ENCODE measurements at regions of chr11 and their contacts with region 1.

Region 1: DNA sequence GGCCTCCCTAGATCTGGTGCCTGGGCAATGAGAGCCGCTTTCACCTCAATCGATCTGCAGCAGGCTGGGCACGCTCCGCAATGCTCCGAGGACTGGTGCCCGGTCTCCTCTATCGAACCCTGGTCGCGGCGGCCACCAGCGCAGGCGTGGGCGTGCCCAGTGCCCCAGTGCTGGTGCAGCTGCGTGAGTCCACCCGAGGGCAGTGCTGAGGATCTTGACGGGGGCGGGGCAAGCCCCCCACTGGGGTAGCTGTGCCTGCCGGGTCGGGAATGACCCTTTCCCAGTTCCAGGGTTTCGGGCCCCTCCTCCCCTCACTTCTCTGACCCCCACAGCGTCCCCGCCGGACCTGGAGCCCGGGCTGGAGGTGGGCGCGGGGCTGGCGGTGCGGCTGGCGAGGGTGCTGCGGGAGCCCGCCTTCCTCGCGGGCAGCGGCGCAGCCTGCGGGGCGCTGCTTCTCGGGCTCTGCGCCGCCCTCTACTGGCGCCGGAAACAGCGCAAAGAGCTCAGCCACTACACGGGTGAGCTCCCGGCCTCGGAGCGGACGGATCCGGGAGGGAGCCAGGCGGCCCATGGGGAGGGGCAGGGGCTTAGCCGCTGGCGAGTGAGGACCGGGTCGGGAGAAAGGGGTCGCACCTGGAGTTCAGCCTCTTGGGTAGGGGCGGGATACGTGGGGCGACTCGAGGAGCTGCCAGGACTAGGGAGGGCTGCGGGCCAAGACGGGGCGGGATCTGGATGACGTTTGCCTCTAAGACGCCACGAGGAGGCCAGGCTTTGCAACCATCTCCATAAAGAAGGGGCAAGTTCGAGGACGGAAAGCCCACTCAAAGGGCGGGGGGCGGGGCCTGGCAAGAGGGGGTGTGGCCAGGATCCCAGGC is 10.9 kb downstream of the ROBO3 start:
- DNase-seq: peak; percentile 89
- ATAC-seq: peak; percentile 83
- H3K4me3 Mint-ChIP-seq: peak overlapping the region; percentile 75
- H3K27ac Mint-ChIP-seq: peak overlapping the region; percentile 74; the same call in 1 of the 2 replicates
- H3K4me1 Mint-ChIP-seq: peaks cover 22% of the 10 kb centered on the region
- H3K27me3 Mint-ChIP-seq: peaks cover 63% of the 10 kb centered on the region
- CTCF ChIP-seq: peak; percentile 50

Region 2: DNA sequence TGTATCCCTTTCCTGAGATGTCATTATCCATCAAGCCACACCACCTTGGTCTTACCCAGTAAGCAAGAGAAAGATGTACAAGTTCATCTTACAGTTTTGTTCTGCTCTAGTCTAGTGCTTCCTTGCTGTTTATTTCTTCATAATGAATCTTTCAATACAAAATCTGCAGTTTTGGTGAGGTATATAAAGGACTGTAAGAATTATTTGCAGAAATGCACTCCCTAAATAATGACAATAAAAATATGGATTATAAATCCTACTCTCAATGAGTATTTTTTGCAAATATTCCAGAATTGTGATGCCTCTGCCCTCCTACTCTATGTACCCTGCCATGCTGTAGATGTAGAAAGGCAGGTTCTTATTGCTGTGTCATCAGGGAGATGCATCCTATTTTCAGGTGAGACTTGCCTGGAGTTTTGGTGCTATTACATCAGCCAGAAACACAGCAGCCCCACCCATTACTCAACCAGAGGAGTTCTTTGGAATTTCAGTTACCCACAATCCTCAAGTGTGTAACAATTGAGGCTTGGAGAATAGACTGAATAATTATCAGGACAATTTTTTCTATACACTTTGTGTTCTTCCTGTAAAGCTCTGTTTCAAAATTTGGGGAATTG is 898.3 kb before region 1 on chr11 and contains the start of gene OR10S1:
- CTCF ChIA-PET with region 1: no interaction called
- POLR2A ChIA-PET with region 1: no interaction called
- DNase-seq: no peak
- ATAC-seq: no peak
- H3K4me3 Mint-ChIP-seq: no peak within 1 kb of the TSS
- H3K27ac Mint-ChIP-seq: no peak within 1 kb of the TSS
- H3K4me1 Mint-ChIP-seq: peaks cover 12% of the 10 kb centered on the region
- H3K27me3 Mint-ChIP-seq: peaks cover 2% of the 10 kb centered on the region; the same call in 1 of the 2 replicates
- CTCF ChIP-seq: no peak
- total RNA-seq, gene OR10S1: not detected in 3 replicates

Region 3: DNA sequence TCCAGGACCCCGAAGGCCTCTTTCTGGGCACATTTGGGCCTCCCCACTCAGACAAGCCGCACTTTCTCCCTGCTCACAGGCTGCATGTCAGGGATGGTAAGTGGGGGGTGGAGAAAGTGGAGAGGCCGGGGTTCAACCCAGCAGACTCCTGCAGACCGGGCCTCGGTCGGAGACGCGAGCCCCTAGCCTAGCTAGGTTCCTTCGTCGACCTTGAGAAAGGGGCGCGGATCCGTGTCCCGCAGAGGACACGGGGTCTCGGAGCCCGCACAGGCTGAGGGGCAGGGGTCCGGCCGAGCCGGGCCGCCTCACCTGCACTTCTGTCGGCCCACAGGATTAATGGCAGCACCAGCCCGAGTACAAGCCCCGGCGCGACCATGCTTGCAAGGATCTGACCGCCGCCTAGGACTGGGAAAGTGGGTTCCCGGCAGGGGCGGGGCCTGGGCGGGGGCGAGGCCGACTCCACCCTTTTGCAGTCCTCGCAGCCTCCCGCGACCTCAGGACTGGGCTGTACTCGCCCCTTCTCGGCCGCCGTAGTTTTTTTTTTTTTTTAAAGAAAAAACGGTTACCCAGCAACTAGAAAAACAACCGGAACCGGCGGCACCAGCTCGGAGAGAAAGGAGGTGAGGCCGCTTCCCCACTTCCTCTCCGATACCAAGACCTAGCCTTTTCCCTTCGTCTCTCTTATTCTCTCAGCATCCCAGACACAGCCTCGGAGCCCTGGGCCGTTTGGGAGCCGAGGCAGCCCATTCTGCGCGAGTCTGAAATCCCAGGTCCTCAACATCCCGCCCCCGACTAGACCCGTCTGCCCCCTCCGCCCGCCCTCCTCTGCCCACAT is 202.6 kb before region 1 on chr11 and contains the starts of genes SIAE and SPA17:
- CTCF ChIA-PET with region 1: interaction called, 15 read pairs
- POLR2A ChIA-PET with region 1: no interaction called
- DNase-seq: peak; percentile 96
- ATAC-seq: peak; percentile 97
- H3K4me3 Mint-ChIP-seq: peak within 1 kb of the TSS; percentile 90
- H3K27ac Mint-ChIP-seq: peak within 1 kb of the TSS; percentile 86
- H3K4me1 Mint-ChIP-seq: peaks cover 11% of the 10 kb centered on the region
- H3K27me3 Mint-ChIP-seq: peaks cover 23% of the 10 kb centered on the region
- CTCF ChIP-seq: no peak
- total RNA-seq, gene SIAE: 4.4 to 4.9 TPM (median 4.8 TPM) in 3 replicates
- total RNA-seq, gene SPA17: 3.5 to 3.8 TPM (median 3.5 TPM) in 3 replicates

Region 4: GRCh38 chr11:124758317-124759203 is 117.6 kb before region 1 on chr11:
- CTCF ChIA-PET with region 1: interaction called, 12 read pairs
- POLR2A ChIA-PET with region 1: no interaction called
- DNase-seq: peak; percentile 95
- ATAC-seq: peak; percentile 75
- H3K4me3 Mint-ChIP-seq: peak overlapping the region; percentile 84
- H3K27ac Mint-ChIP-seq: no peak overlapping the region
- H3K4me1 Mint-ChIP-seq: peaks cover 57% of the 10 kb centered on the region
- H3K27me3 Mint-ChIP-seq: peaks cover 95% of the 10 kb centered on the region
- CTCF ChIP-seq: peak; percentile 44; the same call in 1 of the 2 replicates

Region 5: GRCh38 chr11:124784051-124784450 is 92.1 kb before region 1 on chr11:
- CTCF ChIA-PET with region 1: no interaction called
- POLR2A ChIA-PET with region 1: no interaction called
- DNase-seq: no peak
- ATAC-seq: no peak
- H3K4me3 Mint-ChIP-seq: no peak overlapping the region
- H3K27ac Mint-ChIP-seq: no peak overlapping the region
- H3K4me1 Mint-ChIP-seq: no peaks in the 10 kb centered on the region
- H3K27me3 Mint-ChIP-seq: no peaks in the 10 kb centered on the region
- CTCF ChIP-seq: no peak

Region 6: GRCh38 chr11:124837491-124837856 is 38.7 kb before region 1 on chr11:
- CTCF ChIA-PET with region 1: interaction called, 22 read pairs
- POLR2A ChIA-PET with region 1: no interaction called
- DNase-seq: no peak
- ATAC-seq: peak; percentile 40
- H3K4me3 Mint-ChIP-seq: no peak overlapping the region
- H3K27ac Mint-ChIP-seq: no peak overlapping the region
- H3K4me1 Mint-ChIP-seq: peaks cover 32% of the 10 kb centered on the region
- H3K27me3 Mint-ChIP-seq: peaks cover 34% of the 10 kb centered on the region
- CTCF ChIP-seq: no peak; the same call in 1 of the 2 replicates

Region 7: DNA sequence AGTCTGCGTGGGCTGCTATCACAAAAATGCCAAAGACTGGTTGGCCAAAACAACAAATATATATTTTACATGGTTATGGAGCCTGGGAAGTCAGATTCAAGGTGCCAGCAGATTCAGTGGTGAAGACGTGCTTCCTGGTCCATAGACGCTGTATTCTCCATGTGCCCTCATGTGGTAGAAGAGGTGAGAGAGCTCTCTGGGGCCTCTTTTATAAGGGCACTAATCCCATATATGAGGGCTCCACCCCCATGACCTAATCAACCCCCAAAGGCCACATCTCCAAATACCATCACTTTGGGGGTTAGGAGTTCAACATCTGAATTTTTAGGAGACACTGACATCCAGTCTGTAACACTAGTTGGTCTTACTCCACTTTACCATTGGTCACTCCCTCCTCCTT is 20.7 kb before region 1 on chr11:
- CTCF ChIA-PET with region 1: no interaction called
- POLR2A ChIA-PET with region 1: no interaction called
- DNase-seq: no peak
- ATAC-seq: no peak
- H3K4me3 Mint-ChIP-seq: no peak overlapping the region
- H3K27ac Mint-ChIP-seq: no peak overlapping the region
- H3K4me1 Mint-ChIP-seq: no peaks in the 10 kb centered on the region
- H3K27me3 Mint-ChIP-seq: peaks cover 21% of the 10 kb centered on the region
- CTCF ChIP-seq: no peak

Region 8: DNA sequence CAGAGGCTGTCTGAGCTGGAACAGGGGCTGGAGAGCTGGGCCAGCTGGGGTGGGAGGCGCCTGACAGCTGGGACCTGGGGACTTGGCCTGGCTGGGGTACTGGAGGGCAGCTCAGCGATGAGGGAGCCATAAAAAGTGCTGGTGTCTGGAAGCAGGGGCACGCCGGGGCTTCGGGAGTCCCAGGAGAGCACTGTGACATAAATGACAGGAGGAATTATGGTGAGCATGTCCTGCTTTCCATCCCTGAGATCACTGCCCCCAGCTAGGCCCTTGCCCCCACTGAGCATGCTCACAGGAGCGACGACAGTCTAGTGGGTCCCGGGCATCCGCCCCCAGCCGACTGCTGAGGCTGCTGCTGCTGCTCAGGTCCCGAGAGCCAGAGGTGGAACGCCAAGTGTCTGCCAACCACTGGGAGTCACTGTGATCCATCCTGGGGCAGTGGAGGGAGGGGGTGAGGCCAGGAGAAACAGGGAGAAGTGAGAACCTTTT is 15.2 kb after region 1 on chr11:
- CTCF ChIA-PET with region 1: interaction called, 20 read pairs
- POLR2A ChIA-PET with region 1: no interaction called
- DNase-seq: peak; percentile 34
- ATAC-seq: peak; percentile 84
- H3K4me3 Mint-ChIP-seq: no peak overlapping the region
- H3K27ac Mint-ChIP-seq: no peak overlapping the region
- H3K4me1 Mint-ChIP-seq: no peaks in the 10 kb centered on the region
- H3K27me3 Mint-ChIP-seq: peaks cover 29% of the 10 kb centered on the region
- CTCF ChIP-seq: no peak

Region 9: GRCh38 chr11:124920870-124921609 is 44.9 kb after region 1 on chr11:
- CTCF ChIA-PET with region 1: interaction called, 12 read pairs
- POLR2A ChIA-PET with region 1: interaction called, 7 read pairs
- DNase-seq: peak; percentile 78
- ATAC-seq: peak; percentile 76
- H3K4me3 Mint-ChIP-seq: peak overlapping the region; percentile 61
- H3K27ac Mint-ChIP-seq: no peak overlapping the region
- H3K4me1 Mint-ChIP-seq: no peaks in the 10 kb centered on the region
- H3K27me3 Mint-ChIP-seq: peaks cover 92% of the 10 kb centered on the region
- CTCF ChIP-seq: no peak

Region 10: DNA sequence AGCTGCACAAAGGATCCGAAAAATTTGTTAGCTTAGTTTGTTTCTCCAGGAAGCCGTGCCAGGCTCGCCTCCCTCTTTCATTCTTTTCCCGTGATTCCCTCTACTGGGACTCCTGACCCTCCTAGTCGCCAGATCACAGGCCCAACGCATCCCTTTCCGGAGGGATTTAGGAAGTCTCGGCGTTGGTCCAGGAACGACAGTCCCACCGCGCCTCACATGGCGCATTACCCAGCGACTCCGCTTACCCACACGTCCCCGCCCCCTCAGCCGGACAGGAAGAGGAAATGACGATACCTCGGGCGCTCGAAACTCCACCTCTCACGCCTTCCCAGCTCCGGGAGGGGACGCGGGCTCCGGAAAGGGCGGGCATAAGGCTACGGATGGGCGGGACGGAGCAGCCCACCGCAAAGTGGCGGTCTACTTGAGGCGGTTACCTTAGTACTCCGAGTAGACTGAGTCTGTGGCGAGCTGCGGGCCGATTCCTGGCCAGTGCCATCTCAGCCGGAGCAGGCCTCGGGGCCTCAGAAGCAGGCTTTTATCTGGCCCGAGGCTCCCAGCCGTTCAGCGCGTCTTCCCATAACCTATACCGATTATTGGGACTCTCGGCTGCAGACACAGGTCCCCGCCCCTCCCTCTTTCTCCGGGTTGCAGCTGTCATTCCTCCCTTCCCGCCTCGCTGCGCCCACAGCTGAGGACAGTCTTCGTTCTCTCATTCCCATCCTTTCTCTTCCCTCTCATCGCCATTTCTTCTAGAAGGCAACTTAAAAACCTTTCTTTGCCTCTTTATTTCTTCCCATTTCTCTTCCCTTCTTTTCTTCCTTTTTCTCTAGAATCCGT is 77.8 kb after region 1 on chr11 and contains the start of gene CCDC15:
- CTCF ChIA-PET with region 1: interaction called, 29 read pairs
- POLR2A ChIA-PET with region 1: no interaction called
- DNase-seq: peak; percentile 98
- ATAC-seq: peak; percentile 99
- H3K4me3 Mint-ChIP-seq: no peak within 1 kb of the TSS
- H3K27ac Mint-ChIP-seq: no peak within 1 kb of the TSS
- H3K4me1 Mint-ChIP-seq: no peaks in the 10 kb centered on the region
- H3K27me3 Mint-ChIP-seq: no peaks in the 10 kb centered on the region; the same call in 1 of the 2 replicates
- CTCF ChIP-seq: no peak
- total RNA-seq, gene CCDC15: 2.1 to 2.6 TPM (median 2.4 TPM) in 3 replicates

Measured in WTC11 (cell line).